Heart right ventricle (tissue), 16 donors: ENCODE measurements at regions of chr1 and their contacts with region 1.

Region 1: DNA sequence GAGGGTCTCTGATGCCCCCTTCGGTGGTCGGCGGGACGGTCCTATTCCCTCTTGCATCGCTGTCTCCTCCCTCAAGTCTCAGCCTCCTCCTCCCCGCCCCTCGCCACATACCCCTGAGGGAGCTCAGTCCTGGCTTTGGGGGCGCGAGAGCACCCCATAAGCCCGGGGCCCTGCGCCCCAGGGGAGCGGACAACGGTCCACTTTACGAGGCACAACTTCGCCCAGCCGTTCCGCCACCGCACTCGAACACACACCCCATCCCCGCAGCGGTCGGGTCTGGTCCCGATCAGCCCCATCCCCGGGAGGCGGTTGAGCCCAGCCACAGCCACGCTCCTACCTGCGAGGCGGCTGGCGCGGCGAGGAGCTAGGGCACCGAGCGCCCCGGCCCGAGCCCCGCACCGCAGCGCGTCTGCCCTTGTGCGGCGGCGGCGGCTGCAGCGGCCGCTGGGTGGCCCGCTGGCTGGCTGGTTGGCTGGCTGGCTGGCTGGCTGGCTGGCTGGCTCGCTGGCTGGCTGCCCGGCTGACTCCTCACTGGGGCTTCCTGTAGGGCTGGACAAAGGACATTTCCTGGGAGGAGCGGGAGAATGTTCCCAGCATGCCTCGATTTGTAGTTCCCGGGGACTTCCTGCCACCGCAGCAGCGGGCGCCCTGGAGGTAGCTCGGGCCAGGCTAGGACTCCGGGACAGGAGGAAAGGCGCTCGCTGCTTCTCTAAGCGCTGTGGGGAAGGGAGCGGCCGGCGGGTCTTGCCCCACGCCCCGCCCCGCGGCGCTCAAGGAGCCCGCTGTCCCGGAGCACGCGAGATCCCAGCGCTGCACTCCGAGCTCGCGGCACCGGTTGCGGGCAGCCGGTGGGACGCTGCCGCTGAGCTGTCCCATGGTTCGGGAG is at the start of gene ZNF697:
- DNase-seq: peak; percentile 98
- ATAC-seq: peak; percentile 94 to 98 (median 96)
- H3K4me3 ChIP-seq: peak within 1 kb of the TSS; percentile 85 to 98 (median 94)
- H3K27ac ChIP-seq: peak within 1 kb of the TSS; percentile 79 to 97 (median 93)
- H3K4me1 ChIP-seq: peaks cover 0 to 47% (median 21%) of the 10 kb centered on the region in 9 donors
- H3K27me3 ChIP-seq: peaks cover 0 to 16% (median 0%) of the 10 kb centered on the region in 7 donors
- CTCF ChIP-seq: peak in 5 of 9 donors; percentile 9 to 24 (median 18)
- total RNA-seq, gene ZNF697: 7.7 to 14.1 (median 10.4) TPM

Region 2: DNA sequence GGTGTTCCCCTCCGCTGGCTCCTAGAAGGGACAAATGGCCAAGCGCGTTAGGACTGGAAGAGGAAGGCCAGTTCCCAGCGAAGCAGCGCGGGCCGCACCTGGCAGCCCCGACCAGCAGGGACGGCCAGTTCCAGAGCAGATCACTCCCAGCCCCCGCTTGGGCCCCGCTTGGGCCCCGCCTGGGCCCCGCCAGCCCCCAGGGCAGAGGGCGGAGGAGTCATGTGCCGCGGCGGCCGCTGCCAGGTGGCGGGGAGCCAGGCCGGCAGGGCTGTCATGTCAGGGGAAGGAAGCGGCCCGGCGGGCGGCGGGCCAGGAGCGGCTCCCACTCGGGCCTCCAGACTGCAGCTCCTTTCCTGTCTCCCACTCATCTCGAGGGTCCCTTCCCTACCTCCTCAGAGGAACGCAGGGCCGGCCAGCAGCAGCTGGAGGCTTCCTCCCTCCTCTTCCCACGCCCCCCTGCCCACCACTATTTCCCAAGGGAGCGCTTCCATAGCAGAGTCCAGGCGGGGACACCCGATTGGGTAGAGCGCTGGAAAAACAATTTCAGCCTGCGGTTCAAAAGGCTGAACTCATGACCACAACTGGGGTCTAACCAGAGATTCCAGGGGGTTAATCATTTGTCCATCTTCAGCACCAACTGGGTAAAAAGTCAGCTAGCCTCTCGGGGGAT is 16.4 kb before region 1 on chr1:
- intact Hi-C with region 1: loop called in 5 of 10 experiments (anchors 1 to 2 kb)
- DNase-seq: peak; percentile 92 to 95
- ATAC-seq: peak; percentile 94 to 98 (median 95)
- H3K4me3 ChIP-seq: peak overlapping the region in 9 of 10 donors; percentile 23 to 47 (median 41)
- H3K27ac ChIP-seq: peak overlapping the region; percentile 81 to 96 (median 86)
- H3K4me1 ChIP-seq: peaks cover 18 to 100% (median 81%) of the 10 kb centered on the region in 9 donors
- H3K27me3 ChIP-seq: peaks cover 0 to 17% (median 0%) of the 10 kb centered on the region in 7 donors
- CTCF ChIP-seq: peak in 1 of 9 donors; percentile 19

Region 3: DNA sequence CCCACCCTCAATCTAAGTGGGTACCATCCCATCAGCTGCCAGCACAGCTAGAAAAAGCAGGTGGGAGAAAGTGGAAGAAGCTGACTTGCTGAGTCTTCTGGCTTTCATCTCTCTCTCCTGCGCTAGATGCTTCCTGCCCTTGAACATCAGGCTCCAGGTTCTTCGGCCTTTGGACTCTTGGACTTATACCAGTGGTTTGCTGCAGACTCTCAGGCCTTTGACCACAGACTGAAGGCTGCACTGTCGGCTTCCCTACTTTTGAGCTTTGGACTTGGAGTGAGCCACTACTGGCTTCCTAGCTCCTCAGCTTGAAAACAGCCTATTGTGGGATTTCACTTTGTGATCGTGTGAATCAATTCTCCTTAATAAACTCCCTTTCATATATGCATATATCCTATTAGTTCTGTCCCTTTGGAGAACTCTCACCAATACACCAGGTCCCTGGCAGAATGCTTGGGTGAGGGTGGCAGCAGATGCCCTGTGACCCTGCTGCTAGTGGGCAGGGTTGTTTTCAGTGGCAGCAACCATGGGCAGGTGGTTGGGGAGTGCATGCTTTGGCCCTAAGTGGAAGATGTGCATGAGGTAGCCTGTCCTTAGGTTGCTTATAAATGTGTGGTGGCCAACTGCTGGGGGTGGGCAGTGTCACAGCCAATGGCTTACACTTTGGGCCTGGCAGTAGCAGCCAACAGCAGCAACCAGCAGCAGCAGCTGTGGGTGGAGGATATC is 259.1 kb after region 1 on chr1:
- intact Hi-C with region 1: no loop called
- DNase-seq: no peak
- ATAC-seq: no peak
- H3K4me3 ChIP-seq: no peak overlapping the region
- H3K27ac ChIP-seq: no peak overlapping the region
- H3K4me1 ChIP-seq: no peaks in the 10 kb centered on the region
- H3K27me3 ChIP-seq: no peaks in the 10 kb centered on the region
- CTCF ChIP-seq: no peak